ENCODE measurements at regions of chr19 and their contacts with region 1.

Region 1: GRCh38 chr19:38869856-38870607 is 8.0 kb downstream of the RINL start:
- DNase-seq: peak; percentile 90 to 96 (median 94)
- ATAC-seq: peak; percentile 98
- H3K4me3 ChIP-seq: peak overlapping the region; percentile 85
- H3K4me3 Mint-ChIP-seq: peak overlapping the region; percentile 84 to 94 (median 91)
- H3K27ac ChIP-seq: peak overlapping the region; percentile 77
- H3K27ac Mint-ChIP-seq: peak overlapping the region; percentile 73 to 97 (median 88)
- H3K4me1 ChIP-seq: peaks cover 26 to 31% of the 10 kb centered on the region in 2 donors
- H3K4me1 Mint-ChIP-seq: peaks cover 26 to 63% (median 41%) of the 10 kb centered on the region in 7 donors
- H3K27me3 ChIP-seq: no peaks in the 10 kb centered on the region
- H3K27me3 Mint-ChIP-seq: no peaks in the 10 kb centered on the region

Region 2: GRCh38 chr19:38769635-38770211 is 100.3 kb before region 1 on chr19:
- CTCF ChIA-PET with region 1: interaction called, 3 read pairs
- POLR2A ChIA-PET with region 1: no interaction called
- intact Hi-C with region 1: loop called in 1 of 2 experiments (anchors 2 kb)
- DNase-seq: peak; percentile 81 to 97 (median 86)
- ATAC-seq: peak; percentile 93
- H3K4me3 ChIP-seq: peak overlapping the region; percentile 33
- H3K4me3 Mint-ChIP-seq: peak overlapping the region; percentile 30 to 74 (median 61)
- H3K27ac ChIP-seq: peak overlapping the region; percentile 52
- H3K27ac Mint-ChIP-seq: peak overlapping the region; percentile 56 to 90 (median 83)
- H3K4me1 ChIP-seq: peaks cover 0 to 5% of the 10 kb centered on the region in 2 donors
- H3K4me1 Mint-ChIP-seq: peaks cover 0 to 10% (median 6%) of the 10 kb centered on the region in 7 donors
- H3K27me3 ChIP-seq: no peaks in the 10 kb centered on the region
- H3K27me3 Mint-ChIP-seq: no peaks in the 10 kb centered on the region

Region 3: GRCh38 chr19:38849860-38850435 is 20.1 kb before region 1 on chr19 and contains the start of gene HNRNPL:
- CTCF ChIA-PET with region 1: interaction called, 20 read pairs
- POLR2A ChIA-PET with region 1: interaction called, 317 read pairs
- intact Hi-C with region 1: loop called (anchors 1 kb)
- DNase-seq: peak; percentile 99 to 100 (median 100)
- ATAC-seq: peak; percentile 78
- H3K4me3 ChIP-seq: peak within 1 kb of the TSS; percentile 81
- H3K4me3 Mint-ChIP-seq: peak within 1 kb of the TSS; percentile 88 to 99 (median 96)
- H3K27ac ChIP-seq: peak within 1 kb of the TSS; percentile 96
- H3K27ac Mint-ChIP-seq: peak within 1 kb of the TSS; percentile 94 to 100 (median 99)
- H3K4me1 ChIP-seq: peaks cover 24 to 41% of the 10 kb centered on the region in 2 donors
- H3K4me1 Mint-ChIP-seq: peaks cover 30 to 67% (median 50%) of the 10 kb centered on the region in 7 donors
- H3K27me3 ChIP-seq: no peaks in the 10 kb centered on the region
- H3K27me3 Mint-ChIP-seq: peaks cover 0 to 5% (median 0%) of the 10 kb centered on the region in 5 donors
- total RNA-seq, gene HNRNPL: 339 to 539 (median 505) TPM

Region 4: GRCh38 chr19:38891771-38892170 is 21.7 kb after region 1 on chr19:
- CTCF ChIA-PET with region 1: interaction called, 7 read pairs
- POLR2A ChIA-PET with region 1: interaction called, 3 read pairs
- intact Hi-C with region 1: loop called in 1 of 2 experiments (anchors 1 kb)
- DNase-seq: no peak
- ATAC-seq: no peak
- H3K4me3 ChIP-seq: no peak overlapping the region
- H3K4me3 Mint-ChIP-seq: no peak overlapping the region
- H3K27ac ChIP-seq: no peak overlapping the region
- H3K27ac Mint-ChIP-seq: no peak overlapping the region
- H3K4me1 ChIP-seq: peaks cover 0 to 3% of the 10 kb centered on the region in 2 donors
- H3K4me1 Mint-ChIP-seq: peaks cover 0 to 17% (median 8%) of the 10 kb centered on the region in 7 donors
- H3K27me3 ChIP-seq: no peaks in the 10 kb centered on the region
- H3K27me3 Mint-ChIP-seq: no peaks in the 10 kb centered on the region

Measured in naive thymus-derived CD4-positive, alpha-beta T cell (primary cell).